PC-3 (cell line): ENCODE measurements at regions of chr12 and their contacts with region 1.

Region 1: DNA sequence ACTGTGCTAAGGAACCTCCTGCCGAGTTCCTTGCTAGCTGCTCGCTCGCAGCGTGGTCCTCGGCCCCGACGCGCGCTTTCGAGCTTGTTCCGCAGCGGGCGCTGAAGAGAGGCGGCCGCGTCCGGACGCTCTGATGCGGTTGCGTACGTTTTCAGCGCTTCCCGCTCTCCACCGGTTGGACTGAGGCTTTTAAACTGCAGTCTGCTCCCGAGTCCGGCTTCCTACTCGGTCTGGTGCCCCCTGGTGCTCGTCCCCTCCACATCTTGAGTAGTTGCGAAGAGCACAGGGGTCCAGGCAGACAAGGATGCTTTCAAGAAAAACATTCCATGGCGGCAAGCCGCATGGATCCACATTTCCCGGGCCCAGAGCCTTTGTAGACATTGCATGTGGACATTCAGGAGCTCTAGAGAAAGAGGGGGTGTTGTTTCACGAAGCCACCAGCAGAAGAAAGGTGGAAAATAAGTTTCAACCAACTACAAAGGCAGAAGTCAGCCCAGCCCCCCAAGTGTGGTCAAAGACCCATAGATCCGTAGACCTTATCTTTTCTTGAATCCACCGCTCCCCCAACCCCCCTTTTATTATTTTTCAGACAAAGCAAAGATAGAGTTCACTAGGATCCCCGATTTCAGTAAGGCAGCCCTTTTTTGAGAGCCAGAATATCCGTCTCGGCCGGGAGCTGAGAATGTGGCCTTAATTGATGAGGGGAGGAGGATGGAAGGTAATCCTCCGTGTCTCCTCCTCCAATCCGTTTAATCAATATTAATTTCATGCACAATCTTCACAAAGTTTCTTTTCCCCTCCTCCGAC is 984 bp upstream of the WNK1 start:
- DNase-seq: peak; percentile 93
- ATAC-seq: peak; percentile 57
- H3K4me3 ChIP-seq: peak overlapping the region; percentile 92
- H3K27ac ChIP-seq: peak overlapping the region; percentile 36
- H3K4me1 ChIP-seq: peaks cover 19% of the 10 kb centered on the region
- H3K27me3 ChIP-seq: no peaks in the 10 kb centered on the region
- CTCF ChIP-seq: peak; percentile 76

Region 2: DNA sequence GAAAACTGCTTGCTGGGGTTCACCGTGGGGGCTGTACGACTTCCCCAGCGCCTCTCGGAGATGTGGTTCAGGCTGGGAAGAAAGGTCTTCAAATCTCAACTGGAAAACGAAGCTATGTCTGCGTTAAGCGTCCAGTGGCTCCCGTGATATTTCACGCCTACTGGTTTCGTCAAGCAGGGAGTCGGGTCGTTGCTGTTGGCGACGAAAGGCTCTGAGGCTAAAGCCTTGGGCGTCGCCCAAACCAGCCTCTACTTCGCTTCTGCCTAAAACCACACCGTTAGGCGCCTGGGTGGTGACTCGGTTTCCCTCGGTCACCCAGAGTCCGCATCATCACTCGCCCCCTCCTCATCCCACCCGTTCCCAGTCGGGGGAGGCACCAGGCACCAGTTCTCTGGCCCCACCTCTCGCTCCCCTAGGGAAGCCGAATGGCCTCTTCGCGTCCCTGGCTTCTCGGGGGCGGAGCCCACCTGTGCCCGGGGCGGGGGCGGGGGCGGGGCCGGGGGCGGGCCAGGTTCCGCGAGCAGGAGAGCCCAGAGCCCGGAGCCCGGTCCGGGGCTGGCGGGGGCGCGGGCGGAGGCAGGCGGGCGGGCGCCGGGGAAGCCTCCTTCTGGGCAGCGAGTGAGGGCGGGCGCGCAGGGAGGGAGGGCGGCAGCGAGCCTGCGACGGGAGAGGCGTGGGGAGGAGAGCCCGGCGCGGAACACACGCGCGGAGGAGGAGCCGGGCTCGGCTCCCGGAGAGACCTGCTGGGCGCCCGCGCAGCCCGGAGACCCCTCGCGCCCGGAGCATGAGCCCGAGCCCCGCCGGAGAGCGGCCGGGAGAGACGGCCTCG is 291.8 kb before region 1 on chr12 and contains the start of gene B4GALNT3:
- CTCF ChIA-PET with region 1: no interaction called
- POLR2A ChIA-PET with region 1: no interaction called
- intact Hi-C with region 1: no loop called
- DNase-seq: peak; percentile 34
- ATAC-seq: peak; percentile 63
- H3K4me3 ChIP-seq: peak within 1 kb of the TSS; percentile 67
- H3K27ac ChIP-seq: no peak within 1 kb of the TSS
- H3K4me1 ChIP-seq: peaks cover 16% of the 10 kb centered on the region
- H3K27me3 ChIP-seq: no peaks in the 10 kb centered on the region
- CTCF ChIP-seq: no peak
- total RNA-seq, gene B4GALNT3: 3.7 and 5.0 TPM in 2 replicates

Region 3: GRCh38 chr12:575948-576612 is 175.3 kb before region 1 on chr12:
- CTCF ChIA-PET with region 1: interaction called, 22 read pairs
- POLR2A ChIA-PET with region 1: no interaction called
- intact Hi-C with region 1: loop called (anchors 1 kb)
- DNase-seq: peak; percentile 79
- ATAC-seq: peak; percentile 54
- H3K4me3 ChIP-seq: no peak overlapping the region
- H3K27ac ChIP-seq: no peak overlapping the region
- H3K4me1 ChIP-seq: peaks cover 19% of the 10 kb centered on the region
- H3K27me3 ChIP-seq: no peaks in the 10 kb centered on the region
- CTCF ChIP-seq: peak; percentile 95

Region 4: DNA sequence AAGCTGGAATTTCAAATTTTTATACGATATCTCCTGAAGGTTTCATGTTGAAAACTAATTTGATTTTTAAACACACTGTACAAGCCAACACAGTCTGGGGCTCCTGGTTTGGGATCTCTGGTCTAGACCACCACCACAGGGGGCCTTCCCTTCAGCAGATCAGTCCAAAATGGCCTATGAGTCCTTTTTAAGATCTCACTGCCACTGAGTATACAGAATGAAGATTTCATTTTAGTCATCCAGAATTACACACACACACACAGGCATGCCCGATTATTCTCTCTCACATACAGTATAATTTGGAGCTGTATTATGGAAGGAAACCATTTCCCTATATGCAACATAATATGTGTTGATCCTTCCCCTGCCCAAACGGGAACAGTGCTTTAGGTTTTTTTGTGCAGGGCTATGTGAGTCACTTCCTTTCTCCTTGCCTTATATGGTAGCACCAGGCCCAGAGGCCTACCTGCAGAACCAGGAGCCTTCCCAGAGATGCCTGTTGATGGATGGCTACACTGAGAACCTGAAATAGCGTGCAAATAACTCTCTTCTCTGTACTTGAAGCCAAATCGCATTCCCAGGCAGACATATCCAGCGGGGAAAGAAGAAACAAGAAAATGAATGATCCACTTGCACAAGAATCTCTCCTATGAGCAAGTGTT is 27.1 kb before region 1 on chr12:
- CTCF ChIA-PET with region 1: no interaction called
- POLR2A ChIA-PET with region 1: no interaction called
- intact Hi-C with region 1: no loop called
- DNase-seq: peak; percentile 58
- ATAC-seq: peak; percentile 83
- H3K4me3 ChIP-seq: no peak overlapping the region
- H3K27ac ChIP-seq: no peak overlapping the region
- H3K4me1 ChIP-seq: peaks cover 20% of the 10 kb centered on the region
- H3K27me3 ChIP-seq: no peaks in the 10 kb centered on the region
- CTCF ChIP-seq: no peak

Region 5: GRCh38 chr12:789852-790563 is 38.6 kb after region 1 on chr12:
- CTCF ChIA-PET with region 1: no interaction called
- POLR2A ChIA-PET with region 1: interaction called, 3 read pairs
- intact Hi-C with region 1: loop called (anchors 5 kb)
- DNase-seq: no peak
- ATAC-seq: no peak
- H3K4me3 ChIP-seq: no peak overlapping the region
- H3K27ac ChIP-seq: no peak overlapping the region
- H3K4me1 ChIP-seq: peaks cover 13% of the 10 kb centered on the region
- H3K27me3 ChIP-seq: no peaks in the 10 kb centered on the region
- CTCF ChIP-seq: no peak

Region 6: DNA sequence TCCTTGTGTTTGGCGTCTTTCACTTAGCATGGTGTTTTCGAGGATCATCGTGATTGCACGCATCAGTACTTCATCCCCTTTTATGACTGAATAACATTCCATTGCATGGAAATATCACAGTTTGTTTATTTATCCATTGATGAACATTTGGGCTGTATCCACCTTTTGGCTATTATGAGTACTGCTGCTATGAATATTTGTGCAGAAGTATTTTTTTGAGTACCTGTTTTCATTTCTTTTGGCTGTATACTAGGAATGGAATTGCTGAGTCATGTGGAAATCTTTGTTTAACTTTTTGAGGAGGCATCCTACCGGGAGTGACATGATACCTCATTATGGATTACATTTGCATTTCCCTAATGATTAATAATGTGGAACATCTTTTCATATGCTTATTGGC is 67.3 kb after region 1 on chr12:
- CTCF ChIA-PET with region 1: interaction called, 9 read pairs
- POLR2A ChIA-PET with region 1: interaction called, 22 read pairs
- intact Hi-C with region 1: loop called (anchors 1 kb)
- DNase-seq: peak; percentile 44
- ATAC-seq: no peak
- H3K4me3 ChIP-seq: no peak overlapping the region
- H3K27ac ChIP-seq: no peak overlapping the region
- H3K4me1 ChIP-seq: peaks cover 10% of the 10 kb centered on the region; the same call in 1 of the 2 replicates
- H3K27me3 ChIP-seq: no peaks in the 10 kb centered on the region
- CTCF ChIP-seq: peak; percentile 30; the same call in 1 of the 2 replicates

Region 7: DNA sequence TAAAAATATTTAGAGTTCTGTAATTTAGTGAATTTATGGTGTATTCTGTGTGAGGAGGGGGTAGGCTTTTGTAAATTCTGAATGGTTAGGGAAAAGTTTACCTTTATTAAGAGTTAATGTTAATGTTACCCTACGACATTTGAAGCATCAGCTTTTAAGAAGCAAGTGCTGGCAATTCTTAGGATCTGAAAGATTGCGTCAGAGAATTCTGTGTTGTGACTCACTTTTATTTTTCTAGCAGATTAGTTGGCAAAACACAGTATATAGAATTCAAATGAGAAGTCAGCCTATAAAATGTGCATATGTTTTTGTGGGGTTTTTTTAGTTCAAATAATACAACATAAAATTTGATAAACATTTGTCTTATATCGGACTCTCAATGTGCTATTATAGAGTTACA is 100.5 kb after region 1 on chr12:
- CTCF ChIA-PET with region 1: no interaction called
- POLR2A ChIA-PET with region 1: no interaction called
- intact Hi-C with region 1: no loop called
- DNase-seq: peak; percentile 73
- ATAC-seq: peak; percentile 64; the same call in 1 of the 2 replicates
- H3K4me3 ChIP-seq: no peak overlapping the region
- H3K27ac ChIP-seq: peak overlapping the region; percentile 31
- H3K4me1 ChIP-seq: peaks cover 35% of the 10 kb centered on the region
- H3K27me3 ChIP-seq: no peaks in the 10 kb centered on the region
- CTCF ChIP-seq: no peak

Region 8: GRCh38 chr12:949453-950191 is 198.2 kb after region 1 on chr12 and contains the start of gene RAD52:
- CTCF ChIA-PET with region 1: no interaction called
- POLR2A ChIA-PET with region 1: no interaction called
- intact Hi-C with region 1: loop called (anchors 10 kb)
- DNase-seq: peak; percentile 97
- ATAC-seq: peak; percentile 87
- H3K4me3 ChIP-seq: peak within 1 kb of the TSS; percentile 84
- H3K27ac ChIP-seq: peak within 1 kb of the TSS; percentile 94
- H3K4me1 ChIP-seq: peaks cover 18% of the 10 kb centered on the region
- H3K27me3 ChIP-seq: no peaks in the 10 kb centered on the region
- CTCF ChIP-seq: peak; percentile 84
- total RNA-seq, gene RAD52: 17.4 and 19.3 TPM in 2 replicates